ENCODE measurements at regions of chr3 and their contacts with region 1.

Region 1: DNA sequence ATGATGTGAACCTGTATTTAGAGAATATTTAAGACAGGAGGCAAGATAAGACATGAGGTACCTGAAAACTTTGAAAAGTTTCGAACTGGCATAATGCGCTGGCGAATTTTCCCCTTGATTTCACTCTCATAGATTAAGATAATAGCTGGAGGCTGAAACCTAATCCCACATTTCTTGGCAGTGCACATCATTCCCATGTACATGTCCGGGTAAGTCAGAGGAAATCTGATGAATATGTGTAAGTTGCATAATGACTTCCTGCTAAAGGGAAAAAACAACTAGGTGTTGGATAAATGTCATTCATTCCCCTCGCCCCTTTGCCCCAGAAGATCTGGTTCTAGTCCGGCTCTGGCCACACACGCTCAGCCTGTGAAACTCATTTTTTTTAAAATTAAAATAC is 3.6 kb downstream of the CEP19 start:
- DNase-seq: no peak
- H3K4me3 ChIP-seq: no peak overlapping the region
- H3K27ac ChIP-seq: no peak overlapping the region
- H3K4me1 ChIP-seq: peaks cover 4 to 15% (median 14%) of the 10 kb centered on the region in 4 donors
- H3K27me3 ChIP-seq: no peaks in the 10 kb centered on the region
- CTCF ChIP-seq: no peak
- EP300 ChIP-seq: no peak
- POLR2A ChIP-seq: no peak

Region 2: DNA sequence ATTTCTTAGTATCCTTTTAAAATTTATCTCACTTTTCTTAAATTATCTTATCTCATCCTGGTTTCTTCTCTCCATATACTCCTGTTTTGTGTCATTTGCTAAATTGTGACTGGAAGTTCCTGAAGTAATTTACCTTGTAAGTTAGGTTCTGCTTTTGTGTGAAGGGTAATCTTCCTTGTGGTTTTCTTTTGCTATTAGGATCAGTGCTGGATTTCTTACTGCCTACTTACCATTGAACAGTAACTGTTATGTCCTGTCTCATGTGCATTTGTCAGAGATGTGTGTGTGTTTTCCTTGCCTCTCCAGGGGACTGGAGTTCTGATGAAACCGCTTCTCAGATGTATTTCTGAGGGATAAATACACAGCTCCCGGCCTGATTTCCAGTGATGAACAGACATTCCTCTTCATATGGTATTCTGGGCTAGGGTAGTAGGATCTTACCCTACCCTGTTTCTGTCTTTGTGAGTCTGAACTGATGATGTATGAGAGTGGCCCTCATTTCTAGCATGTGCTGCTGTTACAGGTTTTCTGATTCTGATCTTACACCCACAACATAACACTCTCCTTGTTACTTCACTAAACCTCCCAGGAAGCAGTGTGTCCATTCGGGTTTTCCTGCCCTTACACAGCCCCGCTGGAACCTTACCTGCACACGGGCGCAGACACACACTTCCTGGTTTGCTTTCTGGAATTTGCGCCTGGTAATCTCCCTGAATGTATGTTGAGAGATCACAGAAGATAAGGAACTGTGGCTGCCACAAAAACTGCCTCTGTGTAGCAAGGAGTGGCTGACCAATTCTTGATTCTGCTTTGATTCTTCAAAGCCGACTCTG is 45.8 kb after region 1 on chr3:
- in situ Hi-C with region 1: no loop called
- intact Hi-C with region 1: loop called (anchors 1 kb)
- DNase-seq: peak; percentile 45
- H3K4me3 ChIP-seq: no peak overlapping the region
- H3K27ac ChIP-seq: peak overlapping the region; percentile 41 to 70 (median 66)
- H3K4me1 ChIP-seq: peaks cover 0 to 31% (median 15%) of the 10 kb centered on the region in 4 donors
- H3K27me3 ChIP-seq: no peaks in the 10 kb centered on the region
- CTCF ChIP-seq: no peak
- EP300 ChIP-seq: no peak
- POLR2A ChIP-seq: no peak